ENCODE measurements at regions of chr11 and their contacts with region 1.

Region 1: DNA sequence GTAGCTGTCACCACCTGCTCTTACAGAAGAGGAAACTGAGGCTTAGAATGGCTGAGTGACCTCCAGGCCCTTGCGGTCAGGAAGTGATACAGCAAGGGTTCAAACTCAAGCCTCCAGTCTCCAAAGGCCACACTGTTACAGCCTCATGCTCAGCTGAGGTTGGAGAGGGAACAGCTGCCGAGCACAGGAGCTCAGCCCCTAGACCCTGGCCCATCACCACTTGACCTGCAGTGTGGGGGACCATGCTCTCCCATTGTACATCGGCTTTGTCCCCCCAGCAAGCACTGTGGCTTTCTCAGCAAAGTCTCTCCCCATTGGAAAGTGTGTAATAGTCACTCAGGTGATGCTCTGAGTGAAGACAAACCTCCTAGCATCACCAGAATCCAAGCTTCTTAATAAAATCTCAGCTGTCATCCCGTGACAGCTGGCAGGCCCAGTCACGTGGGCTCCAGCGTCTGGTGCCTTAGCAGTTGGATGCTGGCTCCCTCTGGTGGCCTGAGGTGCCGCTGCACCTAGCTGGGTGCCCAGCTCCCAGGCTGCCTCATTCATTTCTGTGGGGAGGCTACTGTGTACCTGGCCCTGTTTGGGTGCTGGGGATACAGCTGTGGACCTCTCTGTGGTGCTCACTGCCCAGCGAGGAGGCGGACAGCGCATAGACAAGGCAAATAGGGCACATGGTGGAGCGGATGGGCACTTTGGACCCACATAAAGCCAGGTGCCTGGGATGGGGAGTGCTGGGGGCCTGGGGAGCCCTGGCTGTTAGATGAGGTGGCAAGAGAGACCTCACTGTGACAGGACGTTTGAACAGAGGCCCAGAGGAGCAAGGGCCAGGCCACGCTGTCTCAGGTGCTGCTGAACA is 19.1 kb upstream of the MYRF start:
- DNase-seq: peak; percentile 90 to 94 (median 92)
- H3K4me3 ChIP-seq: peak overlapping the region in 1 of 59 donors; percentile 13
- H3K27ac ChIP-seq: peak overlapping the region; percentile 70 to 98 (median 92)
- H3K27me3 ChIP-seq: no peaks in the 10 kb centered on the region
- CTCF ChIP-seq: peak; percentile 98 to 100 (median 100)

Region 2: GRCh38 chr11:61477727-61478148 is 255.6 kb before region 1 on chr11:
- intact Hi-C with region 1: loop called (anchors 5 to 10 kb)
- DNase-seq: peak in 7 of 10 donors; percentile 30 to 75 (median 50)
- H3K4me3 ChIP-seq: peak overlapping the region in 6 of 59 donors; percentile 1 to 28 (median 10)
- H3K27ac ChIP-seq: peak overlapping the region in 13 of 59 donors; percentile 1 to 73 (median 28)
- H3K27me3 ChIP-seq: no peaks in the 10 kb centered on the region
- CTCF ChIP-seq: peak; percentile 82 to 98 (median 94)

Region 3: GRCh38 chr11:61581030-61581928 is 152.1 kb before region 1 on chr11 and contains the start of gene SYT7:
- intact Hi-C with region 1: loop called (anchors 5 to 10 kb)
- DNase-seq: peak; percentile 87 to 95 (median 93)
- H3K4me3 ChIP-seq: peak within 1 kb of the TSS; percentile 37 to 77 (median 63)
- H3K27ac ChIP-seq: peak within 1 kb of the TSS in 51 of 59 donors; percentile 31 to 89 (median 72)
- H3K27me3 ChIP-seq: peaks cover 0 to 14% (median 0%) of the 10 kb centered on the region in 45 donors
- CTCF ChIP-seq: peak in 41 of 56 donors; percentile 7 to 61 (median 34)
- total RNA-seq, gene SYT7: 52.2 to 249 (median 173) TPM

Region 4: DNA sequence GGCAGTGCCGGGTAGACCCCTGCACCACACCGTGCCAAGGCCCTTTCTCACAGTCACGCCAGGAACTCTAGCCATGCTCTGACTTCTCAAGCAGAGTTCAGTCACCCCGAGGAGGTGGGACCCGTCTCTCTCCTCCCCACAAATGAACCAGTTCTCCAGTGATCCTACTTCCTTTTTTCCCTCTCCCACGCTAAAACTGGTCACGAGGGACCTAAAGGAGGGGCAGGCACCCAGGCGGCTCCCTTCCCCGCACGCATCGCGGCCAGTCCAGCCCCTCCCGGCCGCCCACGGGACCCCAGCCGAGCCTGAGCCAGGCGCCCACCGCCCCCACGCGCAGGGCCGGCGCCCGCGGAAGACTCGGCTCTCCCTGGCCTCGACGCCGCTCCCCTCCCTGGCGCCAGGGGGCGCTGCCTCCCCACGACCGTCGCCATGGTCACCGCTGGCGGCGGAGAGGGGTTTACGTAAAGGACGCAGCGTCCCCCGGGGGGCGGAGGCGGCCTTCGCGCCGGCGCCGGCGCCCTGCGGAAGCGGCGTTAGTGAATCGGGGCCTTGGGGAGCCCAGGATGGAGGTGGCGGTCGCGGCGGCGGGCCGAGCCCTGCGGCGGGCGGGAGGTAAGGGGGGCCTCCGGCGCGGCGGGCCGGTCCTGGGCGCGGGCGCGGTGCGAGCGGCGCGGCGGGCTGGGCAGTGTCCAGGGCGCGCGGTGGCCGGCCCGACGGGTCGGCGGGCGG is 53.3 kb before region 1 on chr11 and contains the start of gene DAGLA:
- intact Hi-C with region 1: loop called (anchors 1 kb)
- DNase-seq: peak; percentile 60 to 88 (median 74)
- H3K4me3 ChIP-seq: peak within 1 kb of the TSS; percentile 28 to 77 (median 67)
- H3K27ac ChIP-seq: peak within 1 kb of the TSS in 38 of 59 donors; percentile 11 to 85 (median 54)
- H3K27me3 ChIP-seq: no peaks in the 10 kb centered on the region
- CTCF ChIP-seq: peak; percentile 77 to 99 (median 93)
- total RNA-seq, gene DAGLA: 12.9 to 58.9 (median 36.2) TPM

Region 5: DNA sequence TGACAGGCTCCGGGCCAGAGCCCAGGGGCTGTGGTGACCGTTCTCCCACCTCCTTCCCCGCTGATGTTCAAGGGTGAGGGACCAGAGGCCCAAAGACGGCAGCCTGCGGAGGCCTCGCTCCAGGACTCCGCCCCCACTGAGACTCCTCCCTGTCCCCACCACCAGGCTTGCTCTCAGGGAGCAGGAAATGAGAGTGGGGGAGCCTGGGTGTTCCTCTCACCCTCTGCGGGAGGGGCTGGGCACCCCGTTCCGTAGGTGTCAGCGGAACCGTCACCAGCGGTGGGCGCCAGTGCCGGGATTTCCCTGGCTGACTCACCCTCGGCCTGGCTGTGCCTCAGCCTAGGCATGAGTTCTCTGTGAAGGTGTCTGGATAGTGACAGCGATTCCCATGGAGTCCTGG is 37.4 kb before region 1 on chr11:
- intact Hi-C with region 1: loop called in 1 of 2 experiments (anchors 5 kb)
- DNase-seq: peak in 7 of 10 donors; percentile 45 to 90 (median 76)
- H3K4me3 ChIP-seq: peak overlapping the region in 20 of 59 donors; percentile 0 to 48 (median 22)
- H3K27ac ChIP-seq: peak overlapping the region in 57 of 59 donors; percentile 27 to 90 (median 75)
- H3K27me3 ChIP-seq: no peaks in the 10 kb centered on the region
- CTCF ChIP-seq: peak in 4 of 56 donors; percentile 13 to 26 (median 20)

Region 6: DNA sequence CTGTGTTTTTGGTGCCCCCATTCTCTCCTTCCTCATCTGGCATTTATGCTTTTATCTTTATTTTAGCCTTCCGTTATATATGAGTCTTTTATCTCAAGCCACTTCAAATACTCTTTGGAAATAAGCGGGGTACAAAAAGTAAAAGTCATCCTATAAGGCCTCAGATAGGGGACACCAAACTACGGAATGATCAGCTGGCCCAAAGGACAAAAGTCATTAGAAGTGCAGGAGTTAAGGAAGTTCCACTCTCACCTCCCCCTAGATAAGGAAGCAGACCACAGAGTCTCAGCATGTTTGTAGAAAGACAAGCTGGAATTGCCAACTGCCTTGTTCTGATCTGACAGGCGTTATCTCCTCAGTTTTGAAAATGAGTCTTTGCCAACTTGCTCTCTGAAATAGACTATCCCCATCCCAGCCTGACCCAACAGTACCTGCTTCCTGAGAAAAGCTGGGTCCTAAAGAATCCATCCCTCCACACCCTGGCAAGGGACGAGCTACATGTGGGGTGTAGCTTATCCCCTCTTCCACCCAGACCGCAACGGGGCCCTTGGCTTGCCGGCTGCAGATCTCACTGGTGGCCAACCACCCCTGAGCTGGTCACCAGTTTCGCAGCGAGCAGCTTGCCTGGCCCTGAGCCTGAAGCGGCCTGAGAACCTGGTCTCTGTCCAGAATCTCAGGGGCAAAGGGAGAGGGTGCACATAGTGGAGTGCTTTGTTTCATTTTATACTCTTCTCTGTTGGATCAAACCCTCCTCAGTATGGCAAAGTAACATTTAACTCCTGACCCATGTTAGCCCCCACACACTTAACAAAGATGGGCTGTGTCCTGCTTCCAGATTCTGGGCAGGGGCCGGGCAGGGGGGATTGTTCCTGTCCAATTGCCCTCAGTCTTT is 108.5 kb after region 1 on chr11:
- intact Hi-C with region 1: no loop called
- DNase-seq: peak in 5 of 10 donors; percentile 18 to 60 (median 47)
- H3K4me3 ChIP-seq: peak overlapping the region in 2 of 59 donors; percentile 11 to 15
- H3K27ac ChIP-seq: peak overlapping the region in 35 of 59 donors; percentile 0 to 74 (median 45)
- H3K27me3 ChIP-seq: no peaks in the 10 kb centered on the region
- CTCF ChIP-seq: no peak

Region 7: DNA sequence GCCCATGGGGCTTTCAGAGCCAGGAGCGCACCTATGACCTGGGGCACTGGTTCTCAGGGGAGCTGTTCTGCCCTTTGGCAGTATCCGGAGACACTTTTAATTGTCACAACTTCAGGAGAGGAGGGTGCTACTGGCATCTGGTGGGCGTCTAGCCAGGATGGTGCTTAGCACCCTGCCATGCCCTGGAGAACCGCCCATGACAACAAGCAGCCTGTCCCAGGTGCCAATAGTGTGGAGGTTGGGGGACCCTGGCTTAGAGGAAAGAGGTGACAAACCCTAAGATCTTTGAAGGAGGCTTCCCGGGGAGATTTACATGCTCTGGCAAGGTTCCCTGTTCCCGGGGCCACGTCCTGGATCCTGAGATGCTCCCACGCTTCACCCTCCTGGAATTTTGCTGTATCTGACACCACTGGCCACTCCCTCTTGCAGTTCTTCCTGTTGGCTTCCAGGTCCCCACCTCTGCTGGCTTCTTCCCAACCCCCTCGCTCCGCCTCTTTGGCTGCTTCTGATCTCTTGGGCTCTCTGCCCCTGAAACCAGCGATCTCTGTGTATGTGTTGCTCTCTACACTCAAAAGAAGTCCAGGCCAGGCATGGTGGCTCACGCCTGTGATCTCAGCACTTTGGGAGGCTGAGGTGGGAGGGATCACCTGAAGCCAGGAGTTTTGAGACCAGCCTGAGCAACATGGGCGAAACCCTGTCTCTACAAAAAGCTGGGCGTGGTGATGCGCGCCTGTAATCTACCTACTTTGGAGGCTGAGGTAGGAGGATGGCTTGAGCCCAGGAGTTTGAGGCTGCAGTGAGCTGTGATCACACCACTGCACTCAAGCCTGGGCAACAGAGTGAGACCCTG is 126.9 kb after region 1 on chr11:
- intact Hi-C with region 1: no loop called
- DNase-seq: no peak
- H3K4me3 ChIP-seq: no peak overlapping the region
- H3K27ac ChIP-seq: peak overlapping the region in 2 of 59 donors; percentile 9 to 21
- H3K27me3 ChIP-seq: no peaks in the 10 kb centered on the region
- CTCF ChIP-seq: no peak

Measured in dorsolateral prefrontal cortex (tissue), 120 donors.